ENCODE measurements at regions of chr6 and their contacts with region 1.

Region 1: GRCh38 chr6:116100419-116101301 is at the start of gene NT5DC1:
- DNase-seq: peak; percentile 91
- ATAC-seq: peak; percentile 89
- H3K4me3 ChIP-seq: peak within 1 kb of the TSS; percentile 66 to 94 (median 85)
- H3K4me3 Mint-ChIP-seq: peak within 1 kb of the TSS; percentile 98
- H3K27ac ChIP-seq: peak within 1 kb of the TSS; percentile 73 to 76
- H3K27ac Mint-ChIP-seq: peak within 1 kb of the TSS; percentile 95
- H3K4me1 ChIP-seq: peaks cover 23 to 25% of the 10 kb centered on the region in 2 donors
- H3K4me1 Mint-ChIP-seq: peaks cover 48% of the 10 kb centered on the region
- H3K27me3 ChIP-seq: no peaks in the 10 kb centered on the region
- H3K27me3 Mint-ChIP-seq: no peaks in the 10 kb centered on the region
- CTCF ChIP-seq: peak; percentile 52
- total RNA-seq, gene NT5DC1: 54.2 and 54.8 TPM in 2 replicates

Region 2: GRCh38 chr6:116016846-116017545 is 83.7 kb before region 1 on chr6:
- CTCF ChIA-PET with region 1: interaction called, 165 read pairs
- POLR2A ChIA-PET with region 1: interaction called, 5 read pairs
- intact Hi-C with region 1: loop called (anchors 2 kb)
- DNase-seq: peak; percentile 17
- ATAC-seq: no peak
- H3K4me3 ChIP-seq: no peak overlapping the region
- H3K4me3 Mint-ChIP-seq: peak overlapping the region; percentile 32
- H3K27ac ChIP-seq: no peak overlapping the region
- H3K27ac Mint-ChIP-seq: peak overlapping the region; percentile 57
- H3K4me1 ChIP-seq: peaks cover 35 to 46% of the 10 kb centered on the region in 2 donors
- H3K4me1 Mint-ChIP-seq: peaks cover 51% of the 10 kb centered on the region
- H3K27me3 ChIP-seq: no peaks in the 10 kb centered on the region
- H3K27me3 Mint-ChIP-seq: peaks cover 3% of the 10 kb centered on the region
- CTCF ChIP-seq: no peak

Region 3: GRCh38 chr6:116111552-116112528 is 11.2 kb after region 1 on chr6:
- CTCF ChIA-PET with region 1: interaction called, 15 read pairs
- POLR2A ChIA-PET with region 1: no interaction called
- intact Hi-C with region 1: no loop called
- DNase-seq: peak; percentile 24
- ATAC-seq: no peak
- H3K4me3 ChIP-seq: no peak overlapping the region
- H3K4me3 Mint-ChIP-seq: no peak overlapping the region
- H3K27ac ChIP-seq: no peak overlapping the region
- H3K27ac Mint-ChIP-seq: no peak overlapping the region
- H3K4me1 ChIP-seq: no peaks in the 10 kb centered on the region
- H3K4me1 Mint-ChIP-seq: no peaks in the 10 kb centered on the region
- H3K27me3 ChIP-seq: no peaks in the 10 kb centered on the region
- H3K27me3 Mint-ChIP-seq: no peaks in the 10 kb centered on the region
- CTCF ChIP-seq: peak; percentile 39

Region 4: DNA sequence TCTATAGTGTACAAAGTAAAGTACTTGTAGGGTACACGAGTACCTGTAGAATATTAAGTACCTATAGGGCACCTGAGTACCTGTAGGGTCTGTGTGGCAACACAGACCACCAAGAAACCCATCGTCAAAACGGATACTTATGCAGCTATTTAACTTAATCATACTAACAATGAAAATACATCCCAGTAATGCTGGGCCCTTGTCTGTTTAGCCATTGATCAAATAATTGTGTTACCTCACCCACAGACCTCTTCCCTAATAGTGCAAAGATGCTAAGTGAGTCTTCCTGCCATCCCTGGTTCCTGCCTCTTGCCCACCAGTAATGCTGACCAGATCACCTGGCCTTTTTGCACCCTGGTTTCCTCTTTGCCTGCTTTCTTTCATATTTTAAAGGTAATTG is 32.8 kb after region 1 on chr6:
- CTCF ChIA-PET with region 1: no interaction called
- POLR2A ChIA-PET with region 1: no interaction called
- intact Hi-C with region 1: no loop called
- DNase-seq: no peak
- ATAC-seq: no peak
- H3K4me3 ChIP-seq: no peak overlapping the region
- H3K4me3 Mint-ChIP-seq: no peak overlapping the region
- H3K27ac ChIP-seq: no peak overlapping the region
- H3K27ac Mint-ChIP-seq: no peak overlapping the region
- H3K4me1 ChIP-seq: no peaks in the 10 kb centered on the region
- H3K4me1 Mint-ChIP-seq: no peaks in the 10 kb centered on the region
- H3K27me3 ChIP-seq: no peaks in the 10 kb centered on the region
- H3K27me3 Mint-ChIP-seq: no peaks in the 10 kb centered on the region
- CTCF ChIP-seq: no peak

Region 5: GRCh38 chr6:116279260-116280063 is 178.8 kb after region 1 on chr6 and contains the start of gene TSPYL1:
- CTCF ChIA-PET with region 1: no interaction called
- POLR2A ChIA-PET with region 1: no interaction called
- intact Hi-C with region 1: loop called (anchors 1 kb)
- DNase-seq: peak; percentile 98
- ATAC-seq: peak; percentile 88
- H3K4me3 ChIP-seq: peak within 1 kb of the TSS; percentile 89 to 96 (median 94)
- H3K4me3 Mint-ChIP-seq: peak within 1 kb of the TSS; percentile 97
- H3K27ac ChIP-seq: peak within 1 kb of the TSS; percentile 99
- H3K27ac Mint-ChIP-seq: peak within 1 kb of the TSS; percentile 100
- H3K4me1 ChIP-seq: peaks cover 41 to 48% of the 10 kb centered on the region in 2 donors
- H3K4me1 Mint-ChIP-seq: peaks cover 60% of the 10 kb centered on the region
- H3K27me3 ChIP-seq: no peaks in the 10 kb centered on the region
- H3K27me3 Mint-ChIP-seq: no peaks in the 10 kb centered on the region
- CTCF ChIP-seq: no peak
- total RNA-seq, gene TSPYL1: 98.9 and 101 TPM in 2 replicates

Region 6: DNA sequence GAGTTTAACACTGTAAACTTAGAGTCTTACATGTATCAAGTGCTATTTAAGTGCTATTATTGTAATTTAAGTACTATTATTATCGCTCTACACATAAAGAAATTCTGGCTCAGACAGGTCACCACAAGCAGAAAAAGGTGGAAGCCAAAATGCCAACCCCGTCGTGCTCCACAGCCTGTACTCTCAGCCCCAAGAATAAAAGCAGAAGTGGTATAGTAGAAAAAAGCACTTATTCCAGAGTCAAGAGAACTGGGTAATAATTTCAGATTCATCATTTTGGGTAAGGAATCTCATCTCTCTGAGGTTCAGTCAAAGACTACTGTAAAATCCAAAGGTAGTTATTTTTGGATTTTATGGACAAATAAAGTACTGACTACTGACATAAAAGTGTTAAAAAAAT is 567.0 kb after region 1 on chr6:
- CTCF ChIA-PET with region 1: no interaction called
- POLR2A ChIA-PET with region 1: no interaction called
- intact Hi-C with region 1: loop called (anchors 2 kb)
- DNase-seq: peak; percentile 76
- ATAC-seq: peak; percentile 52
- H3K4me3 ChIP-seq: peak overlapping the region; percentile 73 to 96 (median 91)
- H3K4me3 Mint-ChIP-seq: peak overlapping the region; percentile 100
- H3K27ac ChIP-seq: peak overlapping the region; percentile 88 to 92
- H3K27ac Mint-ChIP-seq: peak overlapping the region; percentile 61
- H3K4me1 ChIP-seq: peaks cover 15 to 26% of the 10 kb centered on the region in 2 donors
- H3K4me1 Mint-ChIP-seq: peaks cover 36% of the 10 kb centered on the region
- H3K27me3 ChIP-seq: no peaks in the 10 kb centered on the region
- H3K27me3 Mint-ChIP-seq: peaks cover 11% of the 10 kb centered on the region
- CTCF ChIP-seq: no peak

Region 7: GRCh38 chr6:117674991-117675657 is 1574.5 kb after region 1 on chr6 and contains the start of gene NUS1:
- CTCF ChIA-PET with region 1: no interaction called
- POLR2A ChIA-PET with region 1: no interaction called
- intact Hi-C with region 1: loop called (anchors 5 kb)
- DNase-seq: peak; percentile 98
- ATAC-seq: peak; percentile 98
- H3K4me3 ChIP-seq: peak within 1 kb of the TSS; percentile 55 to 81 (median 65)
- H3K4me3 Mint-ChIP-seq: peak within 1 kb of the TSS; percentile 90
- H3K27ac ChIP-seq: peak within 1 kb of the TSS; percentile 55 to 75
- H3K27ac Mint-ChIP-seq: peak within 1 kb of the TSS; percentile 94
- H3K4me1 ChIP-seq: peaks cover 28 to 30% of the 10 kb centered on the region in 2 donors
- H3K4me1 Mint-ChIP-seq: peaks cover 42% of the 10 kb centered on the region
- H3K27me3 ChIP-seq: no peaks in the 10 kb centered on the region
- H3K27me3 Mint-ChIP-seq: no peaks in the 10 kb centered on the region
- CTCF ChIP-seq: peak; percentile 75
- total RNA-seq, gene NUS1: 22.1 and 23.1 TPM in 2 replicates

Measured in B cell (primary cell).